A549 (cell line): ENCODE measurements at regions of chr22 and their contacts with region 1.

Region 1: DNA sequence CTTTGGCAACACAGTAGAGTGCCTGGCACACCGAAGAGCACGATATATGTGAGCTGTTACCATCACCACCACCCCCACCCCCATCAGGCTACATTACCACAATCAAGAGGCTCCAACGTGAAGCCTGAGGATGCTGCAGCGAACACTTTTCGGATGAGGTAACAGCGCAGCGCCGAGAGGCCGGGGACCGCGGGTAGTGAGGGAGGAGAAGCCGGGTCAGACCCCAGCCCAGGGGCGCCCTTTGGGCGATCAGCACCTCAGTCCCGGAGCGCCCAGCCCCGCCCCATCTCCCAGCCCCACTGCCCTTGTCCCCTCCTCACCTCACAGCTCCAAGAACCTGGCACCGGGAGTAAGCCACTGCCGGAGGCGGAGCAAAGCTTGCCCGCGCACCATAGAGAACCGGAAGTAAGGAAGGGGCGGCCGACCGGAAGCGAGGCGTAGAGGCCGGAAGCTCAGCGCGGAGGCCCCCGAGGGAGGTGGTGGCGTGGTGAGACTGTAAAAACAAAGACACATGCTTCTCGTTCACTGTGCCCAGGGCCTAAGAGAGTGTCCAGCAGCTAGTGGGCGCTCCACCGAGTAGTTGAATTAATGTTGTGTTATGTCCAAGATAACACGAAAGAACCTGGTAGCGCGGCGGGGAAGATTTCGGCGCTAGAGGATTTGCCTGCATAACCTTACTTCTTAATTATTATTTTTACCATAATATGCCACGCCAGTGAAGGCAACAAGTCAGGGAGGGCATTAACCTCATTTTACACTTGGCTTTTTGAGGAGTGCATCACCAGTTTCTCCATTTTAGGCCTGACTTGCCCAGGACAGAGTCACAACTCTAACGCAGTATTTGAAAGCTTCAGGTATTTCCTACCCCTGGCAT is at the start of gene THOC5:
- DNase-seq: peak; percentile 88 to 95
- ATAC-seq: peak; percentile 100
- H3K4me3 ChIP-seq: peak within 1 kb of the TSS; percentile 83
- H3K27ac ChIP-seq: peak within 1 kb of the TSS; percentile 79 to 95
- H3K4me1 ChIP-seq: peaks cover 11% of the 10 kb centered on the region
- CTCF ChIP-seq: peak; percentile 59
- EP300 ChIP-seq: no peak
- POLR2A ChIP-seq: peak; percentile 66
- RAD21 ChIP-seq: peak; percentile 20 to 29; a peak in 2 of 5 replicates
- polyA plus RNA-seq, gene THOC5: 34.4 and 43.3 TPM in 2 replicates

Region 2: GRCh38 chr22:29512031-29512430 is 41.6 kb before region 1 on chr22:
- CTCF ChIA-PET with region 1: interaction called, 12 read pairs
- POLR2A ChIA-PET with region 1: no interaction called
- DNase-seq: no peak
- ATAC-seq: no peak
- H3K4me3 ChIP-seq: no peak overlapping the region
- H3K27ac ChIP-seq: no peak overlapping the region
- H3K4me1 ChIP-seq: no peaks in the 10 kb centered on the region
- CTCF ChIP-seq: no peak
- EP300 ChIP-seq: no peak
- POLR2A ChIP-seq: no peak
- RAD21 ChIP-seq: no peak

Region 3: GRCh38 chr22:29563652-29564460 is 10.3 kb after region 1 on chr22:
- CTCF ChIA-PET with region 1: interaction called, 20 read pairs
- POLR2A ChIA-PET with region 1: no interaction called
- DNase-seq: no peak
- ATAC-seq: no peak
- H3K4me3 ChIP-seq: no peak overlapping the region
- H3K27ac ChIP-seq: no peak overlapping the region
- H3K4me1 ChIP-seq: no peaks in the 10 kb centered on the region
- CTCF ChIP-seq: no peak
- EP300 ChIP-seq: no peak
- POLR2A ChIP-seq: no peak
- RAD21 ChIP-seq: no peak

Region 4: GRCh38 chr22:29569011-29569678 is 15.6 kb after region 1 on chr22:
- CTCF ChIA-PET with region 1: interaction called, 20 read pairs
- POLR2A ChIA-PET with region 1: no interaction called
- DNase-seq: no peak
- ATAC-seq: no peak
- H3K4me3 ChIP-seq: no peak overlapping the region
- H3K27ac ChIP-seq: no peak overlapping the region
- H3K4me1 ChIP-seq: no peaks in the 10 kb centered on the region
- CTCF ChIP-seq: no peak
- EP300 ChIP-seq: no peak
- POLR2A ChIP-seq: no peak
- RAD21 ChIP-seq: no peak